ENCODE measurements at regions of chr17 and their contacts with region 1.

Region 1: DNA sequence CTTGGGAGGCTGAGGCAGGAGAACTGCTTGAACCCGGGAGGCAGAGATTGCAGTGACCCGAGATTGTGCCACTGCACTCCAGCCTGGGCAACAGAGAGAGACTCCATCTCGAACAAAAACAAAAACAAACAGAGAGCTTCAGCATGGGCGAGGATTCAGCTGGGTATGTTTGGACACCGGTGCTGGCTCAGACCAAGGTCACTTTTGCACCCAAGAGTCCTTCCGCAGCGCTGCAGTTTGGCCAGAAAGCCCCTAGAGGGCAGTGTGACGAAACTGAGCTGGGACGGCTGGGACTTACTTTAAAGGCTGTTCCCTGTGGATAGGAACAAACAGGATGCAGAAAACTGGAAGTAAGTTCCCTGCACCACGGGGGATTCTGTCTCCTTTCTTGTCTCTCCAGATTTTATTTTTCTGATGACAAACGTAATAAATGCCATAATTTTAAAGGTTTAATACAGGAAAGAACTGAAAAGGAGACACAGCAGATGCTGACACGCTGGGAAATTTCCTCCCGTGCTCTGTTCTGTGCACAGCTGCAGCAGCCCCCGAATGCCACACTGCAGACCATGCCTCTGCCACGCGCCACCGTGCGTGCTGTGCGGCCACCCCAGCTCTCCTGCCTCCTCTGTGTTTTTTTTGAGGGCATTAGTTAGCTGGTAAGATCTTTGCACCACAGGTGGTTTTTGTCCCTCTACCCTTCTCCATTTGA is 25.2 kb upstream of the USP36 start:
- DNase-seq: peak; percentile 80 to 98 (median 90)

Region 2: DNA sequence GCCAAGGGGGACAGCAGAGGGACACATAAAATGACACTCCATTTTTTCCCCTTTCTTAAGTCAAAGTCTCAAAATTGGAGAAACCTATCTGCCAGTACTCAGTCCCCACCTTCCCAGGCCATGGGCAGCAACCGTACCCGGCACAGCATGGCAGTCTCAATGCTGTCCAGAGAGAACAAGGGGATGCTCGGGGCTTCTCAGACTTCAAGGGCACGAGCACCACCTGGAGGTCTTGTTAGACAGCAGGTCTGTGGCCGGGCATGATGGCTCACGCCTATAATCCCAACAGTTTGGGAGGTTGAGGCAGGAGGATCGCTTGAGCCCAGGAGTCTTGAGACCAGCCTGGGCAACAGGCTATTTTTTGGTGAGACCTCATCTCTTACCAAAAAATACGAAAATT is 291.9 kb before region 1 on chr17:
- intact Hi-C with region 1: no loop called
- DNase-seq: no peak

Region 3: DNA sequence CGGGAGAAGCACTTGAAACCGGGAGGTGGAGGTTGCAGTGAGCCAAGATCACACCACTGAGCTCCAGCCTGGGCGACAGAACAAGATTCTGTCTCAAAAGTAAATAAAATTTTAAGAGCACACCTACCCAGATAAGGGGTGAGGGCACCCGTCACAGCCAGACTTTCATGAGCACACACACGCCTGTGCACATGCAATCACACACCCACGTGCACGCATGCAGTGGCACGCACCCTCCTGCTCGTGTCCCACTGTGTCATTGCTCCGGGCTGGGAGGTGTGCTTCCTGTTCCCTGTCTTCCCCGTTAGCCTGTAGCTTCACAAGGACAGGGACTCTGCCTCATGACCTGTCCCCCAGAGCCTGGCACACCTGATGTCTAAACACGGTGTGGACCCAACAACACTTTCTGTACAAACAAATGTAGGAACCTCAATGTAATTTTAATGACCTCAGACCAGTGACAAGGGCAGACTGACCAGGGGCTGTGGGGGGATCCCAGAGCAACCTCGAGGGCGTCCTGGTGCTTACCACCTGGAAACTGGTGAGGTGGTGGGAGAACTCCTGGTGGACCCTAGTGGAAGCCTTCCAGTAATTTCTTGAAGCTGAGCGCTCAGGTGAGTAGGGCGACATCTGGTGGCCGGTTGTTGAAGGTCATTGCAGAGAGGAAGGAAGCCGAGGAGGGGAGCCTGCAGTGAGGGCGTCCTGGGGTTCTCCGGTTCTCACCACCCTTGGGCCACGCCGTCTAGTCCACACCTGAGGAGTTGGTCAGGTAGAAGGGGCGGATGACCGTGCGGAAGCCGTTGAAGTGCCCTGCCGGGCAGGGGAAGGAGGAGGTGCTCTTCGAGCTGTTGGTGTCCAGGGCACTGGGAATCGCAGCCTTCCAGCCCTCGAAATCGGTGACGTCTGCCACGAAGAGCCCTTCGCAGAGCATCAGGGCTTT is 105.3 kb after region 1 on chr17:
- intact Hi-C with region 1: loop called (anchors 1 kb)
- DNase-seq: peak; percentile 64 to 96 (median 86)

Measured in posterior cingulate gyrus (tissue), 11 donors.